IMR-90 (cell line): ENCODE measurements at regions of chr9 and their contacts with region 1.

Region 1: DNA sequence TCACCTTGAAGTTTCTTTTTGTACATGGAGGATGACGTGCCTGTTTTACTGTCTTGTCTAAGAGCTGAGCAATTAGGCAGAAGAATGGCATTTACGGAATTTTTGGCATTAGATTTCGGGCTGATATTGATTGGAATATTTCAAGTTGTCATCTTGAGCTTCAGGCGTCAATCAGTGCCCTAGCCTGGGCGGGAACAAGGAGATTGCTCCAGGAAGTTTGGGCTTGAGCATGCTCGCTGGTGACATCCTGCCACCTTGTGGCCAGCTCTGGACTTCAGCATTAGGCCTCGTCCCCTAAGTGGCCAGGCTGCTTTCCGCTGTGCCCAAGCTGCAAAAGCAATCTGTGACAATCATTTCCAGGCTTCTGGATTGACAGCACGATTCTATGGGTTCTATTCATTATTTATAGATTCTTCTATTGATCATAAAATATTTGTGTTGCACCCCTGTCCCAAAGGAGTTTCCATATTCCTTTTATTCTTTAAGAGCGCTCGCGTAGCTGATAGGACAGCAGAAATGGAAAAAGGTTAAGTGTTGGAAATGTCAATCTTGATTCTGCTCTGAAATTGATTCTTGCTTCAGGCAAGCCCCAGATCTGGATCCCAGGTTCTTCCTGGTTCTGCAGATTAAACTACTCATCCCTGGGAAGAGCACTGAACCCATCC is 79.3 kb downstream of the SLC28A3 start:
- DNase-seq: peak; percentile 75
- ATAC-seq: peak; percentile 99
- H3K4me3 ChIP-seq: peak overlapping the region; percentile 17; the same call in 1 of the 2 replicates
- H3K27ac ChIP-seq: no peak overlapping the region
- H3K4me1 ChIP-seq: no peaks in the 10 kb centered on the region
- H3K27me3 ChIP-seq: no peaks in the 10 kb centered on the region
- CTCF ChIP-seq: peak; percentile 92
- POLR2A ChIP-seq: no peak
- RAD21 ChIP-seq: peak; percentile 98

Region 2: DNA sequence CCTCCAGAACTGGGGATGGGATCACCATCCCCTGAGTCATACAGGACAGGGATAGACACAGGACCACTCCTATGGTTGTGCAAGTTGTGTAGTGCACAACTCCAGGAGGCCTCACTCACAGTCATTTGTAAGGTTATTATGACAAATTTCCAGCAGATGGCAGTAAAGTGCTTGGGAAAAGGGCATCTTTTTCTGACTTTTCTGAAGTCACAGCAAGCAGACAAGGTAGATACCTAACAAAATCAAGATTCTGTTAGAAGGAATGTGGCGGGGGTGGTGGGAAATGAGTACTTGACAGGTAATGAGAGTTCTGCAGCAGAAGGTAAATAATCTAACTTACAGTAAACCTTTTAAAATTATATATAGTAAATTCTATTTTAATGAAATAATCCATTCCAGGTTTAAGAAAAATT is 323.3 kb before region 1 on chr9:
- CTCF ChIA-PET with region 1: interaction called, 25 read pairs
- POLR2A ChIA-PET with region 1: no interaction called
- dilution Hi-C with region 1: no loop called
- in situ Hi-C with region 1: loop called (anchors 5 kb)
- intact Hi-C with region 1: loop called (anchors 1 kb)
- DNase-seq: peak; percentile 62
- ATAC-seq: peak; percentile 71
- H3K4me3 ChIP-seq: no peak overlapping the region
- H3K27ac ChIP-seq: no peak overlapping the region
- H3K4me1 ChIP-seq: peaks cover 5% of the 10 kb centered on the region
- H3K27me3 ChIP-seq: no peaks in the 10 kb centered on the region
- CTCF ChIP-seq: peak; percentile 68
- POLR2A ChIP-seq: no peak
- RAD21 ChIP-seq: peak; percentile 88

Region 3: DNA sequence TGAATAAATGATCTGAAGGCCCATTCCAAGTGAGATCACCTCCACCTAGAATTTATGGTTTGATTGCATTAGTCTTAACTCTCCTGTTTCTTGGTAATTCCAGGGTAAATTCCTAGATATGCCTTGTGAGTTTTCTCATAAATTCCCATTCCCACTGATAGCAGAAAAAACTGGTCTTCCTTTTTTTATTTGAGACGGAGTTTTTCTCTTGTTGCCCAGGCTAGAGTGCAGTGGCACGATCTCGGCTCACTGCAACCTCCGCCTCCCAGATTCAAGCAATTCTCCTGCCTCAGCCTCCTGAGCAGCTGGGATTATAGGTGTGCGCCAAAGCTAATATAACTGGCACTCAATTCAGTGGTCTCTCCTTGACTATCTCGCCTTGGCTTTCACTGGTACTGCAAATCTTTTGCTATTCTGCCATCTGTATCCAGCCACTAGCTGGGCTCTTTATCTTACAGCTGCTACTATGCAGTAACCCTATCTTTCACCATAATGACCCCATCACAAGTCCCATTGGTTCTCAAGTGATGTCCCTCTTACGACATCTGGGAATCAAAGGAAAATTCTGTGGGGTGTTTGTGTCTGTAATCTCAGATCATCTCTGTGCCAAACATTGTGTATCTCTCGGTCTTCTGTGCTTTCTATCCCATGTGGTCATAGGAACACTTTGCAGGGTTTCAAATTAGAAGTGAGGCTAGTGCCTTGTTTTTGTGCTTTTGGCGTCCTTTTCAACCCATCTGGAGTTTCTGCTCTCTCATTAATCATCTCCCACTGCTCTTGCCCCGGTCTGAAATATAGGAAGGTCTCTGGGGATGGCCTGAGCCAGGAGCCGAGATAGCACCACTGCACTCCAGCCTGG is 295.6 kb before region 1 on chr9:
- CTCF ChIA-PET with region 1: interaction called, 6 read pairs
- POLR2A ChIA-PET with region 1: interaction called, 22 read pairs
- dilution Hi-C with region 1: no loop called
- in situ Hi-C with region 1: no loop called
- intact Hi-C with region 1: no loop called
- DNase-seq: peak; percentile 43
- ATAC-seq: peak; percentile 50
- H3K4me3 ChIP-seq: no peak overlapping the region
- H3K27ac ChIP-seq: no peak overlapping the region; the same call in 1 of the 2 replicates
- H3K4me1 ChIP-seq: peaks cover 4% of the 10 kb centered on the region; the same call in 1 of the 2 replicates
- H3K27me3 ChIP-seq: no peaks in the 10 kb centered on the region
- CTCF ChIP-seq: no peak
- POLR2A ChIP-seq: no peak
- RAD21 ChIP-seq: no peak

Region 4: DNA sequence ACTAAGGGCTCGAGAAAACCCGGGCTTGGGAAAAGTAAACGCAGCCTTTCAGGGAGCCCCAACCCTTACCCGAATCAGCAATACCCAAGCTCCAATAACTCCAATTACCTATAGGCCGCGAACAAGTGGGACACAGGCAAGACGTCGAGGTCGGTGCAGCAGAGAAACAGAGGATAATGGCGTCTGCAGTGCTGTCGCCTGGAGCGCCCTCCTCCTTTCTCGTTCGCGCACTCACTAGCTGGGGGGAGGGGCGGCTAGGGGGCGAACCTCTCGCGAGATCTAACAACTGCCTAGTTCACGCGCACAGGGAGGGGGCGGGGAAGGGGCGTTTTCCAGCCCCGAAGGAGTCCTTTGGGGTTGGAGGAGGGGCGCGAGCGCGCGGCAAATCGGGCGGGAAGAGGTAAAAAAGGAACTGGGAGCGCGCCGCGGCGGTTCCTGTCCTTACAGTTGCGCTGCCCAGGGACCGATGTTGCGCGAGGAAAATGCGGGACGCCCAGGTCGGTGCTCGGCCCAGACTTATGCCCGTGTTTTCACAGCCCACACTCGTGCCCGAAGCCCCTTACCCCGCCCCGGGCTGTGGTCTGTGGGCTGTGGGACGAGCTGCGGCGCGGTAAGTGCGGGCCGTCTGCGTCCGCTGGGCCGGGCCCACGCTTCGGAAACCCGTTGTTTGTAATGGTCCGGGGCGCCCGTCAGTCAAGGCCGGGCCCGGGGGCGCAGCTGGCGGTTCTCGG is 280.7 kb before region 1 on chr9 and contains the start of gene RMI1:
- CTCF ChIA-PET with region 1: interaction called, 7 read pairs
- POLR2A ChIA-PET with region 1: no interaction called
- dilution Hi-C with region 1: no loop called
- in situ Hi-C with region 1: no loop called
- intact Hi-C with region 1: loop called (anchors 1 kb)
- DNase-seq: peak; percentile 96
- ATAC-seq: peak; percentile 88
- H3K4me3 ChIP-seq: peak within 1 kb of the TSS; percentile 88
- H3K27ac ChIP-seq: peak within 1 kb of the TSS; percentile 98
- H3K4me1 ChIP-seq: no peaks in the 10 kb centered on the region
- H3K27me3 ChIP-seq: no peaks in the 10 kb centered on the region
- CTCF ChIP-seq: 0 out of 2 replicates have a peak, but pooled peaks have one; percentile 13
- POLR2A ChIP-seq: peak; percentile 95
- RAD21 ChIP-seq: no peak
- total RNA-seq, gene RMI1: 6.8 and 12.8 TPM in 2 replicates

Region 5: DNA sequence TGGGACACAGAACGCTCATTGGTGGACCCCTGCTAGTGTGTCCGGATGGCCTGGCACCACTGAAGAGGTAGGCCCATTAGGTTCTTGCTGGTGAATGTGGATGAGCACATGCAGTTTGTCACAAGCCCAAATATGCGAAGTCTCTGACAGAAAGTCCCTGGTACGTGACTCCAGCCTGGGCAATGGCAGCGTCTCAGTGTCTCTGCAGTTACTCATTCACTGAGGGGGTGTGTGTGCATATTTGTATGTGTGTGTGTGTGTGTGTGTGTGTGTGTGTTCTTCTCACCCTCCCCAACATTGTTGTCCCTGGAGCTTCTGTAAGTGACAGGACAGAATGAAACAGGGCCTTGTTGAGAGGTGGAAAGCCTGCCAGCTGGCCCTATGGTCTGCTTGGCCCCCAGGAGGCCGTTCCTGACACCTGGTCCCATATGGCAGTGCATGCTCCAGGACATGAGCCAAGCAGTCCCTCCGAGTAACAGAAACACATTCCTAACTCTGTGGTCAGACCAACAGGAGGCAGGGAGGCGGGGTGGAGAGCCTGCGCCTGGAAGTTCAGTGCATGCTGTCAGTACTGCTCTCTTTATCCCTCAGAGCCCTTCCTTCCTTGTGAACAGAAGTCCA is 90.6 kb before region 1 on chr9:
- CTCF ChIA-PET with region 1: interaction called, 4 read pairs
- POLR2A ChIA-PET with region 1: no interaction called
- dilution Hi-C with region 1: no loop called
- in situ Hi-C with region 1: no loop called
- intact Hi-C with region 1: loop called (anchors 2 kb)
- DNase-seq: peak; percentile 98
- ATAC-seq: peak; percentile 96
- H3K4me3 ChIP-seq: no peak overlapping the region
- H3K27ac ChIP-seq: peak overlapping the region; percentile 81
- H3K4me1 ChIP-seq: peaks cover 17% of the 10 kb centered on the region
- H3K27me3 ChIP-seq: no peaks in the 10 kb centered on the region
- CTCF ChIP-seq: 0 out of 2 replicates have a peak, but pooled peaks have one; percentile 13
- POLR2A ChIP-seq: no peak
- RAD21 ChIP-seq: peak; percentile 23; the same call in 1 of the 2 replicates